GM10248 (cell line): ENCODE measurements at regions of chr22 and their contacts with region 1.

Region 1: DNA sequence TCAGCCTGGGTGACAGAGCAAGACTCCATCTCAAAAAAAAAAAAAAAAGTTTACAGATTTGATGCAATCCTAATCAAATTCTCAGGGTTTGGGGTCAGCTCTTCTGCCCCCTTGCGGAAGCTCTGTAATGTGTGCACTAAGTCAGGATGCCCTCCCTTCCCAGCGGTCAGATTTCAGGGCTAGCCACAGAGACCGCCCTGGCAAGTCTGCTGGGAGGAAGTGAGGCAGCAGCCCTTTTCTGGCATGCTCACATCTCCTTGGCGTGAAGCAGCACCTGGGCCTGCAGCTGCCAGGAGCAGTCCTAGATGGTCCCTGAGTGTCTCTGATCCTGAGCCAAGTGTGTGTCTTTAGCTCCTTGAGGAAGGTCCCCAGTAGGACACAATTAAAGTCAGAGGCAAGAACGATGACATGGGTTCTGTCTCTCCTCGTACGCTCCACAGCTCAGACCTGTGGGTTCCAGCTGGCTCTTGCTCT is 10.9 kb upstream of the APOBEC3C start:
- DNase-seq: peak; percentile 85
- CTCF ChIP-seq: peak; percentile 70

Region 2: DNA sequence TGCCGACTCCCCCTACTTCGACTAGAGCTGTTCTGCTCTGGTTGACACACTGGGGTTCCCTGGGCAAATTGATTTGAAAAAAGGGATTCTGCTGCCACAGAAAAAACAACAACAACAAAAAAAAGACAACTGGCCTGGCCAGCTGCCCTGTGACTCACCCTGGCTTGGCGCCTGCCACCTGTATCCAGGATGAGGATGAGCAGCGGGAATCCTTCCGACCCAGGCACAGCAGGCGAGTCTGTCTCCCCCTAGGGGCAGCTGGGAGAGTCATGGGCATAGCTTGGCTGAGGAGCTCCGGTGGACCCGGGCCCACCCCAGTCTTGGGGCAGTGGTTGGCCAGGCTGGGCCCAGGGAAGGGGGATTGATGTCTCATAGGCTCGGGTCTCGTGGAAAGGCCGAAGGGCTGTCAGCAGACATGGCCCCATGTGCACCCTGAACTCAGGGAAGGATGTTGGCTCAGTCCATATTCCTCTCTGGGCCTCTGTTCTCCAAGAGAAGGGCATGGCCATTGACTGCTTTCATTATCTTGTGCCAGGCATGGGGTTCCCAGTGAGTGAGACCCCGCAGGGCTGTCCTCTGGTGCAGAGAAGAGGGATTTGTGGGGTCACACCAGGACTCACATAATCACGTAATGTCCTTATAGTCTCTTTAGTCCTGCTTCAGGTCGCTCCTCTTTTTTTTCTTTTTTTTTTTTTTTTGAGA is 237.0 kb before region 1 on chr22:
- CTCF ChIA-PET with region 1: interaction called, 24 read pairs
- POLR2A ChIA-PET with region 1: no interaction called
- DNase-seq: peak; percentile 54
- CTCF ChIP-seq: peak; percentile 83

Region 3: DNA sequence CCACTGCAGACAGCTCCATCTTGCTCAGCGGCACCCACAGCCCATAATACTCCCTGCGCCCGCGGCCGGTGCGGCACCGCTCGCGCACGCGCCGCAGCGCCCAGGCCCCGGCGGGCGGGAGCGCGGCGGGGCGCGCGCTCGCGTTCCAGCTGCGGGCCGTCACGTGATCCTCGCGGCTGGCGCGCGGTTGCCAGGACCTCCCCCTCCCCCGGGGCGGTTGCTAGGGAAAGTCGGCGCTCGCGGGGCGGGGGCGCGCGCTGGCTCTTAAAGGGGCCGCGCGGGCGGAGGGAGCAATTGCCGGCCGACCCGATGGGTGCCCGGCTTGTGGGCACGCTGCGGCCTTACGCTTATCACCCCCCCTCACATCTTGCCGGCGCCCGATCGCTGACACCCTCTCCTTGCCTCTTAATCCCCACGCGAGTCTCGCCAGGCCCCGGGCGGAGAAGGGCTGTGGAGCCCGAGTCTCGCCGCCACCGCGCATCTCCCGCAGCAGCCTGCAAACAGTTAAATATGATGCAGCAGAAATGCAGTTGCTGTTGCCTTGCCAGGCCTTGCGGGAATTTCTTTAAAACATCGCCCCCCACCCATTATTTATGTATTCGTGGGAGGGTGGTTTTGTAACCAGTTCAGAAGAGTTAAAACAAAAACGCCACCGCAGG is 130.9 kb before region 1 on chr22 and contains the start of gene CBX6:
- CTCF ChIA-PET with region 1: interaction called, 90 read pairs
- POLR2A ChIA-PET with region 1: no interaction called
- DNase-seq: peak; percentile 95
- CTCF ChIP-seq: no peak

Region 4: DNA sequence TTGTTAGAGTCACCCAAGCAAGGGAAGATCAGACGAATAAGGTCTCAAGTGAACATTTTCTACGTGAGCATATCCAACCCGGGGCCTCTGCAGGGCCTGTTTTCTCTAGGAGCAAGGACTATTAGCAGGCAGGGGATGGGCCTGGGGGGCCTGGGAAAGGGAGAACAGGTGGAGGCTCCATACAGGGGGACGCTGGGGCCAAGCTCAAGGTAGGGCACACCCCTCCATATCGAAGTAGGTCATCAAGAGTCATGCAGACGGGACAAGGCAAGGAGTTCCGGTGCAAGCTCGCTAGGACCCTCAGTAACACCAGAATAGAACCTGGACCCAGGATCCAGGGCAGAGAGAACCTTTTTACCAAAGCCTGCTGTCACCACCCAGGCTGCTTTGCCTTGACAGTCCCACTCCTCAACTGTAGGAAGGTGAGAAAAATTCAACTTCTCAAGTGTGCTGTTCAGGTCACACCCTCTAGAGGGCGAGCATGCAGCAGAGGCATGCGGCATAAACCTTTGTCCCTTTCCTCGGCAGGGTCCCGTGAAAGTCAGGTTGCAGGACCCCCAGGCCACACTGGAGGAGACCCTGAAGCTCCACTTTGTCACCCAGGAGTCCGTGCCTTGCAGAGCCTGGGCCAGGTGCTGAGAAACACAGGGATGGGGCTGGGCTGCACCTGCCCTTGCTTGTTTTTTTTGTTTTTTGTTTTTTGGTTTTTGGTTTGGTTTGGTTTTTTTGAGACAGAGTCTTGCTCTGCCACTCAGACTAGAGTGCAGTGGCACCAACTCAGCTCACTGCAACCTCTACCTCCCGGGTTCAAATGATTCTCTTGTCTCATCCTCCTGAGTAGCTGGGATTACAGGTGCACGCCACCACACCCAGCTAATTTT is 29.7 kb before region 1 on chr22:
- CTCF ChIA-PET with region 1: interaction called, 28 read pairs
- POLR2A ChIA-PET with region 1: no interaction called
- DNase-seq: peak; percentile 80
- CTCF ChIP-seq: peak; percentile 94

Region 5: GRCh38 chr22:38981992-38982927 is 20.9 kb before region 1 on chr22 and contains the start of gene APOBEC3B:
- CTCF ChIA-PET with region 1: interaction called, 20 read pairs
- POLR2A ChIA-PET with region 1: no interaction called
- DNase-seq: peak; percentile 90
- CTCF ChIP-seq: no peak

Region 6: DNA sequence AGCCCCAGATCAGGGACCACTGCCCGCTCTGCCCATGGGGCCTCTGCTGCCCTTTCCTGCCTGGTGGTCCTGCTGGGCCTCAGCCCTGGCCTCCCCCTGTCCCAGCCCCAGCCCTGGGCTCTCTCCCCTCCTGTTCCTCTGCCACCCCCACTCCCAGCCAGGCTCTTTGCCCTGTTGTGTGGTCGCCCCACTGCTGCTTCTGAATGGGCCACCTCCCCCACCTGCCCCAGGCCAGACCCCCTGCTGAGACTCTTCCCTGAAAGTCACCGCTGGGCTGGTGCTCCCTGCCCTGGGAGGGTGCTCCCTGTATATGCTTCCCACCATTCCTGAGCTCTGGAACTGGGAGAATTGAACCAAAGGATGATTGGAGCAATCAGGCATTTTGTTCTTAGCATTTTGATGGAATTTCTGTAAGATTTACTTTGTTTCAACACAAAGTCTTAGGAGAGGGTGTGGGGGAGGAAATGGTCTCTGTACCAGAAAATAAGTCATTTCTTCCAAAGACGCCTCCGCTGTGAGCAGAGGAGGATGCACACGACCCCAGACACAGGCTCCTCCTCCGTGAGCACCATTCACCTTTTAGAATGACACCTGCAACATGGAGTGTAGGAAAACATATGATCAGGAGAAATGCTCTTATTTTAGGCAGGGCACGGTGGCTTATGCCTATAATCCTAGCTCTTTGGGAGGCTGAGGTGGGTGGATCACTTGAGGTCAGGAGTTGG is 15.9 kb before region 1 on chr22:
- CTCF ChIA-PET with region 1: interaction called, 20 read pairs
- POLR2A ChIA-PET with region 1: no interaction called
- DNase-seq: no peak
- CTCF ChIP-seq: no peak

Region 7: DNA sequence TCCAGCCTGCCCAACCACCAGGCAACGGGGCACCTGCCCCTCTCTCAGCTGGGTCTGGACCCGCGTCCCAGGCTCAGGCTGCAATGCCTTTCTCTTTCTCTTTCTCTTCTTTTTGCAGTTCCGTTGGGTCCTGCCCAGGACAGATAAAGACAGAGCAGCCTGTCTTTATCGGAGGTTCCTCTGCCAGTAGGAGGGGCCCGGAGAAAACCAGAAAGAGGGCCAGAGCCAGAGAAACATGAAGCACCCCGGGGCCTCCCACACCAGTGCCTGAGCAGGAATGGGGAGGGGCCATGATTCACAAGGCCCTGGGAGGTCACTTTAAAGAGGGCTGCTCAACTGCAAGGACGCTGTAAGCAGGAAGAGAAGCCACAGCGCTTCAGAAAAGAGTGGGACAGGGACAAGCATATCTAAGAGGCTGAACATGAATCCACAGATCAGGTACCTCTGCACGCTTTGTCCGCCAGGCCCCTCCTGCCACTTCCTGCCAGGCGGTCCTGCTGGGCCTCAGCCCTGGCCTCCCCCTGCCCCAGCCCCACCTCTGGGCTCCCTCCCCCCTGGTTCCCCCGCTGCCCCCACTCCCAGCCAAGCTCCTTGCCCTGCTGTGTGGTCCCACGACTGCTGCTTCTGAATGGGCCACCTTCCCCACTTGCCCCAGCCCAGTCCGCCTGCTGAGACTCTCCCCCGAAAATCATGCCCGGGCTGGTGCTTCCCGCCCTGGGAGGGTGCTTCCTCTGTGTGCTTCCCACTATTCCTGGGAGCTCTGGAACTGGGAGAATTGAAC is 10.9 kb after region 1 on chr22 and contains the start of gene APOBEC3C:
- CTCF ChIA-PET with region 1: interaction called, 15 read pairs
- POLR2A ChIA-PET with region 1: no interaction called
- DNase-seq: peak; percentile 88
- CTCF ChIP-seq: peak; percentile 44